ENCODE measurements at regions of chr2 and their contacts with region 1.

Region 1: DNA sequence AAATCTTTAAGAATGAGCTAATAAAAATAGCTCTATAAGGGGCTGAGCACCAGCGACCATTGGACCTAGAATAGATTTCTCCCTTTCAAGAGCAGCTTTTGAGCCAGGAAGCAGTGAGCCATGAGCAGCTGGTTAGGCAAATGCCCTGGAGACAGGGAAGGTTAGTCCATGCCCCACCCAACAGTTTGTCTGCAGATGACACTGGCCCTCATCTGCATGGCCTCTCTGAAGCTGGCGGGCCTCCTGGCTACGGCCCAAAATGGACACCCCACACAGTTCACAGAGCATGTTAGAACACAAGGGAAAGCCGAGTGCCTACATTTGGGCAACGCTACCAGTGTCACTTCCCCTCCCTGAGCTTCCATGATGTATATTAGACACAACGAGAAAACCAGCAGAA is 201.1 kb downstream of the MGAT5 start:
- DNase-seq: no peak
- H3K4me3 Mint-ChIP-seq: no peak overlapping the region
- H3K27ac Mint-ChIP-seq: no peak overlapping the region
- H3K4me1 Mint-ChIP-seq: peaks cover 13% of the 10 kb centered on the region
- H3K27me3 Mint-ChIP-seq: no peaks in the 10 kb centered on the region
- CTCF ChIP-seq: no peak

Region 2: DNA sequence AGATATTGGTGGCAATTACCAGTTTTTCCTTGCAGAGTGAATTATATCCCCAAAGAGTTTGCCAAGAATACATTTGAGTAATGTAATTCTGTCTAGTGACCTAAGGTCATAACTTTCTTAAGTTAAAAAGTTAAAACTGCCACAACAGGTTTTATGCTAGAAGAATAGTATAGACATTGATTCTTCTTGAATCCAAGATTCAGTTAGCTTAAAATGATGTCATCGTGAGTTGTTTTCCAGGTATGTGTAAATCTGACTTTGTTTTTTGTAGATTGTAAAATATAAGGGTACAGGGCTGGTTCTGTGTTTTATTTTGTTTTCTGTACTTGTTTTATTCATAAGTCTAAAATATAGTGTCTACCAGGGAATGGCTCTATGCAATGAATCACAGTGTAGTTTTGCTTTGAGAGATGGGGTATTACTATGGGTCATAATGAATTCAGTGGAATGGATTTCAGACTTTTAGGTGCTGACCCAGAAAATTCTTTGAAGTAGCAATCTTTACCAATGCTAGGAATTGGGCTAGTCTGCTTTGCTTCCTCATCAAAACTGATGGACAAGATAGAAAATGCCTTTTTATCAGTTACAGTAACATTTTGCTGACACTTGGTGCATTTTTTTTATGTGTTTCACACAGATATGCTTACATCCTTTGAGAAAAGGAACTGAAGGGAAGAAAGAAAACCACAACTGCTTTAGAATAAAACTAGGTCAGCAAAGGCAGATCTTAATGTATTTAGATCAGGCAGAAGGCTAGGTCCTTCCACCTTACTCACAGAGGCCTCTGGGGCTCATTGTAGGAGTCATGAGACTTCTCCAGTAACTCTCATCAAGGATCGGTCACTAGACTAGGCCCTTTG is 221.8 kb before region 1 on chr2:
- CTCF ChIA-PET with region 1: interaction called, 5 read pairs
- intact Hi-C with region 1: loop called (anchors 5 kb)
- DNase-seq: no peak
- H3K4me3 Mint-ChIP-seq: peak overlapping the region; percentile 42
- H3K27ac Mint-ChIP-seq: peak overlapping the region; percentile 97
- H3K4me1 Mint-ChIP-seq: peaks cover 71% of the 10 kb centered on the region
- H3K27me3 Mint-ChIP-seq: no peaks in the 10 kb centered on the region
- CTCF ChIP-seq: no peak

Region 3: GRCh38 chr2:134375935-134376334 is 79.0 kb before region 1 on chr2:
- CTCF ChIA-PET with region 1: interaction called, 16 read pairs
- intact Hi-C with region 1: loop called (anchors 1 kb)
- DNase-seq: peak; percentile 25
- H3K4me3 Mint-ChIP-seq: no peak overlapping the region
- H3K27ac Mint-ChIP-seq: no peak overlapping the region
- H3K4me1 Mint-ChIP-seq: no peaks in the 10 kb centered on the region
- H3K27me3 Mint-ChIP-seq: no peaks in the 10 kb centered on the region
- CTCF ChIP-seq: no peak

Region 4: GRCh38 chr2:134431838-134432434 is 23.0 kb before region 1 on chr2:
- CTCF ChIA-PET with region 1: interaction called, 28 read pairs
- intact Hi-C with region 1: no loop called
- DNase-seq: no peak
- H3K4me3 Mint-ChIP-seq: peak overlapping the region; percentile 46
- H3K27ac Mint-ChIP-seq: peak overlapping the region; percentile 82
- H3K4me1 Mint-ChIP-seq: peaks cover 51% of the 10 kb centered on the region
- H3K27me3 Mint-ChIP-seq: no peaks in the 10 kb centered on the region
- CTCF ChIP-seq: no peak

Region 5: DNA sequence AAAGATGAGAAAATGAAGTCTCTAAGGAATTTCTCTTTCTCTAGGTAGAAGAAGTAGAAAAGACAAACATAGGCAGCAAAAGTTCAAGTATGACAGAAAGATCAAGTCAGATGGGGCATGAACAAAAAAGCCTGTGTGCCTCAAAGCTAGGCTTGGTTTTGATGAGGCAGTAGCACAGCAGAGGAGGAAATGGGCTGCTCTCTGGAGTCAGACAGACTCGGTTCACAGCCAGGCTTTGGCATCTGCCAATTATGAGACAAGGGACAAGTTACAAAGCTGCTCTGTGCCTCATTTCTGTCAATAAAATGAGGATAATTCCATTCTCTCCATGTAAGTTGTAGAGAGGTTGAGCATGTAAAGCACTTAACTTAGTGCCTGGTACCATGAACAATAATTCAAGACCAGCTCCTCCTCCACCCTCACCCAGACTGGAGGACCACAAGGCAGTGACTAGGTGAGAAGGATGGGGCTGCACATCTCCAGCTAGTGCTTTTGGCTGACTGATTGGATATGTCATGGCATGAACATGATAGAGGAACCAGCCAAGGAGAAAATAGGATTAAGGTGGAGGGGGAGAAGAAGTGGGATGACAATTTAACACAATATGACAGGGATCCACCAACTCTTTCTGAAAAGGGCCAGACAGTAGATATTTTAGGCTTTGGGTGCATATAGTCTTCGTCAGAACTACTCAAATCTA is 179.3 kb after region 1 on chr2:
- CTCF ChIA-PET with region 1: no interaction called
- intact Hi-C with region 1: no loop called
- DNase-seq: no peak
- H3K4me3 Mint-ChIP-seq: no peak overlapping the region
- H3K27ac Mint-ChIP-seq: no peak overlapping the region
- H3K4me1 Mint-ChIP-seq: no peaks in the 10 kb centered on the region
- H3K27me3 Mint-ChIP-seq: no peaks in the 10 kb centered on the region
- CTCF ChIP-seq: no peak

Region 6: DNA sequence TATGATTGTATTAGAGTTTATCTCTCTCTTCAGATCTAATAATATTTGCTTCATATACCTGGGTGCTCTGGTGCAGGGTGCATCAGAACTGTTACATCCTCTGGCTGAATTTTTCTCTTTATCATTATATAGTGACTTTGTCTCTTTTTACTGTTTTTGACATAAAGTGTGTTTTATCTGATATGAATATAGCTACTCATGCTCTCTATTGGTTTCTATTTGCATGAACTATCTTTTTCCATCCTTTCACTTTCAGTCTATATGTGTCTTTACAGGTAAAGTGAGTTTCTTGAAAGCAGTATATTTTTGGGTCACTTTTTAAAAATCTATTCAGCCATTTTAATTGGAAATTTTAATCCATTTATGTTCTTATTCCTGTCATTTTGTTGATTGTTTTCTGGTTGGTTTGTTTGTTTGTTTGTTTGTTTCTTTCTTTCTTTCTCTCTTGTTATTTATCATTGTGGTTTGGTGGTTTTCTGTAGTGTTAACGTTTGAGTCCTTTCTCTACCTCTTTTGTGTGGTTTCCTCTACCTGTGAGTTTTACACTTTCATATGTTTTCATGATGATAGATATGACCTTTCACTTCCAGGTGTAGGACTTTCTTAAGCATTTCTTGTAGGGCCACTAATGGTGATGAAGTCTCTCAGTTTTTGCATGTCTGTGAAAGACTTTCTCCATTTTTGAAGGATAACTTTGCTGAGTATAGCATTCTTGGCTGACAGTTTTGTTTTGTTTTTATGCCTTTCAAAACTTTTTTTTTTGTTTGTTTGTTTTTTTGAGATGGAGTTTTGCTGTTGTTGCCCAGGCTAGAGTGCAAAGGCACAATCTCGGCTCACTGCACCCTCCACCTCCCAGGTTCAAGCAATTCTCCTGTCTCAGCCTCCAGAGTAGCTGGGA is 518.6 kb after region 1 on chr2:
- CTCF ChIA-PET with region 1: no interaction called
- intact Hi-C with region 1: no loop called
- DNase-seq: no peak
- H3K4me3 Mint-ChIP-seq: no peak overlapping the region
- H3K27ac Mint-ChIP-seq: no peak overlapping the region
- H3K4me1 Mint-ChIP-seq: no peaks in the 10 kb centered on the region
- H3K27me3 Mint-ChIP-seq: no peaks in the 10 kb centered on the region
- CTCF ChIP-seq: no peak

Measured in Calu3 (cell line).